ENCODE measurements at regions of chr12 and their contacts with region 1.

Region 1: DNA sequence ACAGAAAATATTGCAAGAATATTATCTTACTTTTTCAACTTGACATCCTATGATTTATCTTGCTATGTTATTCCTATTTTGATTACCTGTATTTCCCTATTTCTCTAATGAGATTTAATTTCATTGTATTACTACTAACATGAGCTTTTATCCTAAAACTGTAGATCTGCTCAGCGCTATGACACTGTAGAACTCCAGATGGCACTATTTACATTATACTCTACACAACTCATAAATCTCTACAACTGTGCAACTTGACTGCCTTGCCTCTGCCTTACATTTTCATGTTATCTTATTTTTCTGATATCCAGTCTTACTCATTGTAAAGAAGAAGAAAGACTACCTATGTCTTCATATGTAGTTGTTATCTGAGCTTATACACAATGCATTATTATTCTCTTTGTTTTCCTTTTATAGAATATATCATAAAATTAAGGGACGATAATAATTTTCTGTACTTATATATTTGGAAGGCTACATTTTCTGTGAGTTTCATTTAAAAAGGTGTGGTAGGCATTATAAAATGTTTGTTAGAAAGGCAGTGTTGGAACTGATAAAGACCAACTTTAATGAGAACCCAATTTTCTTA is 24.1 kb downstream of the NUP37 start:
- DNase-seq: no peak
- ATAC-seq: no peak
- H3K4me3 ChIP-seq: no peak overlapping the region
- H3K27ac ChIP-seq: no peak overlapping the region
- H3K4me1 ChIP-seq: peaks cover 0 to 13% (median 0%) of the 10 kb centered on the region in 12 donors
- H3K27me3 ChIP-seq: no peaks in the 10 kb centered on the region
- CTCF ChIP-seq: peak in 7 of 12 donors; percentile 14 to 42 (median 26)
- POLR2A ChIP-seq: no peak

Region 2: DNA sequence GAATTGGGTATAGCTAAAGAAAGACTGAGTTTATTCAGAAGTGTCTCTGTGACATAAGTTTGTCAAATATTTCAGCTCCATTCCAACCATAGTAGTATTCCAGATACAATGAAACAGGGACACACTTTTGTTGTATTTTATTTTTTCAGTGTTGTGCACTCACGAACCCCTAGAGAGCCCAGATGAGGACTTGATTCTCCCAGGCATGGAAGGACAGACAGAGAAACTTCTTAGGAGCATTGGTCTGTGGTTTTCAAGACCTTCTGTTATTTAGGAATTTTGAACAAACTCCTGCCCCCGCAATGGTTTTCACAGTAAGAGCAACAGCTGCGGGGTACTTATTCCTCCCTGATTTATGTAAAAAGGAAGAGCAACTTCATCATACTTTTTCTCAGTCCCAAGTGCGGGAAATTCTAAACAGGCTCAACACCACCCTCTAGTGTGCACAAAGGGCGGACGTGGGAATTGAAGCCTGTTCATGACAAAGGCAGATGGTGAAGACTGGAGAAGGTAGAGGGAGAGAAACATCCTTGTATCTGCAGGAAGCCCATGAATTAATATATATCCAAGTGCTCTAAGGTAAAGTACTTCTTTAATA is 673.6 kb after region 1 on chr12:
- intact Hi-C with region 1: loop called in 1 of 10 experiments (anchors 10 kb)
- DNase-seq: peak; percentile 38 to 64 (median 47)
- ATAC-seq: peak; percentile 60 to 88 (median 69)
- H3K4me3 ChIP-seq: no peak overlapping the region
- H3K27ac ChIP-seq: peak overlapping the region in 3 of 12 donors; percentile 20 to 60 (median 36)
- H3K4me1 ChIP-seq: no peaks in the 10 kb centered on the region
- H3K27me3 ChIP-seq: no peaks in the 10 kb centered on the region
- CTCF ChIP-seq: peak; percentile 23 to 68 (median 47)
- POLR2A ChIP-seq: no peak

Measured in heart left ventricle (tissue), 16 donors.